ENCODE measurements at regions of chr14 and their contacts with region 1.

Region 1: GRCh38 chr14:95468448-95469145 is 47.9 kb downstream of the SYNE3 start:
- DNase-seq: no peak
- ATAC-seq: peak; percentile 11

Region 2: GRCh38 chr14:95424529-95424928 is 44.1 kb before region 1 on chr14:
- intact Hi-C with region 1: no loop called
- DNase-seq: no peak
- ATAC-seq: peak; percentile 67

Region 3: GRCh38 chr14:95515596-95516552 is 47.3 kb after region 1 on chr14:
- intact Hi-C with region 1: loop called (anchors 5 kb)
- DNase-seq: peak; percentile 86
- ATAC-seq: peak; percentile 67

Region 4: DNA sequence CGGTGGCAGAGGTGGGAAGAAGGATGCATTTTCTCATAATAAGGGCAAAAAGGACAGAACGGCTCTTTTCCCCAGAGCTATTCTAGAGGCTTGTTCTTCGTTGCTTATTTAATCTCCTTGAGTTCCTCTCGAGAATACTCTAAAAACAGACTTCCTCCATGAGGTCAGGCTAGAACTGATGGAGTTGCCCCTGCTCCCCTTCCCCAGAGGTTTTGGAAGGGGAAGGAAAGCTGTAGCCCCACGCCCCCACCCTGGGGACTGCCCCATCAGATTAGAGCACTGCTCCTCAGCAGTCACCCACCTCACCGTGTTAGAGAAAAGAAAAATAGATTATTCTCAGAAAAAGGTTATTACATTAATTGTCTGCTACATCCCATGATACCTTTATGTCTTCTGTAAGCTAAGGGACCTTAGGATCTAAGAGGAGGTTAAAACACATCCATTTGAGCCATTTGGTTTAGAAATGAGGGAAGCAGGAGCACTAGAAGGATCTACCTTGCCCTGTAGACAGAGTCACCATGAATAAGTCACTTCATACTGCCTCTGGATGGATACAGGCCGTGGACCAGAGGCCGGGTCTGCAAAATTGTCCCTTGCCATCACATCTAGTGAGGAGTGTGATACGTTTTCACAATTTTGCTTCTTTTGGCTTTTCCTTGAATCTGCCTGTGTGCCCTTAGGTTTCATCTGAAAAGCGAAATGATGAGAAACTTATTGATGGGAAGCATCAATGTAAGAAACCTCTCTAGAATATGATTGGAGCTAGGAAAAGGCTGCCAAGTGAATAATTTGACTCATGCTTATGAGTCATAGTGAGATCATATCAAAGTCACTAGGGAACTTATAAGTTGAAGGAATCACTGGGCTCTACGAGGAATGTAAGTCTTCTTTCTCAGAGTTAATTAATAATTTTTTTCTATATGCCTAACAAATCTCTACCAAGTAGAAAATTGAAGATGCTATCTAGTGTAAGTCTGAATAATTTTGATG is 76.9 kb after region 1 on chr14:
- intact Hi-C with region 1: no loop called
- DNase-seq: no peak
- ATAC-seq: peak; percentile 57